T-cell (primary cell): ENCODE measurements at regions of chr5 and their contacts with region 1.

Region 1: GRCh38 chr5:93582677-93583438 is at the start of gene NR2F1:
- DNase-seq: peak in 1 of 35 experiments; percentile 38
- ATAC-seq: no peak
- H3K4me3 ChIP-seq: peak within 1 kb of the TSS in 1 of 2 donors; percentile 32
- H3K4me3 Mint-ChIP-seq: peak within 1 kb of the TSS in 2 of 3 donors; percentile 64 to 69
- H3K27ac ChIP-seq: no peak within 1 kb of the TSS
- H3K27ac Mint-ChIP-seq: no peak within 1 kb of the TSS
- H3K4me1 ChIP-seq: peaks cover 11 to 66% of the 10 kb centered on the region in 2 experiments
- H3K4me1 Mint-ChIP-seq: peaks cover 29 to 39% (median 37%) of the 10 kb centered on the region in 3 donors
- H3K27me3 ChIP-seq: peaks cover 16 to 77% of the 10 kb centered on the region in 2 experiments
- H3K27me3 Mint-ChIP-seq: peaks cover 38 to 47% of the 10 kb centered on the region in 2 donors
- total RNA-seq, gene NR2F1: 0.25 to 0.67 (median 0.33) TPM in 3 of 5 donors, not detected in the others

Region 2: GRCh38 chr5:93800988-93801811 is 218.3 kb after region 1 on chr5:
- CTCF ChIA-PET with region 1: interaction called in 1 of 2 experiments, 11 read pairs
- POLR2A ChIA-PET with region 1: interaction called in 1 of 2 experiments, 4 read pairs
- DNase-seq: peak in 10 of 35 experiments; percentile 1 to 68 (median 7)
- ATAC-seq: no peak
- H3K4me3 ChIP-seq: no peak overlapping the region
- H3K4me3 Mint-ChIP-seq: no peak overlapping the region
- H3K27ac ChIP-seq: no peak overlapping the region
- H3K27ac Mint-ChIP-seq: no peak overlapping the region
- H3K4me1 ChIP-seq: no peaks in the 10 kb centered on the region
- H3K4me1 Mint-ChIP-seq: peaks cover 0 to 3% (median 3%) of the 10 kb centered on the region in 3 donors
- H3K27me3 ChIP-seq: no peaks in the 10 kb centered on the region
- H3K27me3 Mint-ChIP-seq: no peaks in the 10 kb centered on the region

Region 3: GRCh38 chr5:94810281-94810680 is 1227.4 kb after region 1 on chr5:
- CTCF ChIA-PET with region 1: interaction called in 1 of 2 experiments, 10 read pairs
- POLR2A ChIA-PET with region 1: no interaction called
- DNase-seq: no peak
- ATAC-seq: no peak
- H3K4me3 ChIP-seq: no peak overlapping the region
- H3K4me3 Mint-ChIP-seq: no peak overlapping the region
- H3K27ac ChIP-seq: no peak overlapping the region
- H3K27ac Mint-ChIP-seq: no peak overlapping the region
- H3K4me1 ChIP-seq: no peaks in the 10 kb centered on the region
- H3K4me1 Mint-ChIP-seq: no peaks in the 10 kb centered on the region
- H3K27me3 ChIP-seq: no peaks in the 10 kb centered on the region
- H3K27me3 Mint-ChIP-seq: no peaks in the 10 kb centered on the region